ENCODE measurements at regions of chr17 and their contacts with region 1.

Region 1: DNA sequence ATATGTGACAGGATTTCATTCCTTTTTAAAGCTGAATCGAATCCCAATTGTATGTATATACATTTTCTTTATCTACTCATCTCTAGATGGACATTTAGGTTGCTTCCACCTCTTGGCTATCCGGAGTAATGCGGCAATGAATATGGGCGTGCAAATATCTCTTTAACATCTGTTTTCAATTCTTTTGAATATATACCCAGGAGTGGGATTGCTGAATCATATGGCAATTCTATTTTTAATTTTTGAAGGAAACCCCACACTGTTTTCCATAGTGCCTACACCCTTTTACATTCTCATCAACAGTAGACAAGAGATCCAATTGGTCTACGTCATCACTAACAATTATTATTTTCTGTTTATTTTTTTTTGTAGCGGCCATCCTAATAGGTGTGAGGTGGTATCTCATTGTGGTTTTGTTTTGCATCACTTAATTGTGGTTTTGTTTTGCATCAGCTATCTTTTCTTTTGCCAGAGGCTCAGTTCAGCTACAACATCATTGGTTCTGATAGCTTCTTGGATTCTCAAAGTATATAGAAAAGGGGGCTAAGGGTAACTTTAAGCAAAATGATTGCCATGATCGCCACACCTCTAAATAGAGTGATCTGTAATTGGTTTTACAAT is 25.6 kb upstream of the MAP2K6 start:
- DNase-seq: no peak
- H3K4me3 ChIP-seq: no peak overlapping the region
- H3K27ac ChIP-seq: no peak overlapping the region
- H3K4me1 ChIP-seq: no peaks in the 10 kb centered on the region
- CTCF ChIP-seq: no peak

Region 2: DNA sequence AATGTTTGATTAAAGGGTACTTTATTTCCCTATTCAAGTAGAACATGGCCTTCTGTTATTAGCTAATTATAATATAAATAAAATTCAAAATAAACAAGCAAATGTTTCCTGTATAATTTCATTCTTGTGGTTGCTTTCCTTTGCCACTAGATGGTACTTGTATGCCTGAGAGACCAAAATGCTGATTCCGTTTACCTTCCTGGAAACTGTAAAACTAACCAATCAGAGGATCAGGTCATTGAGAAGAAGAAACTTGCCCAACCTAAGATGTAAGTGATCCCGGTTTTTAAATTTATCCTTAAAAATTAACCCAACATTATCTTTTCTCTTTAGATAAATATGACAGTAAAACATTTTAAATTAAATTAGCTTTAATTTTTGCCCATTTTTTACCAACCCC is 53.9 kb before region 1 on chr17:
- CTCF ChIA-PET with region 1: no interaction called
- POLR2A ChIA-PET with region 1: interaction called, 4 read pairs
- intact Hi-C with region 1: loop called (anchors 5 kb)
- DNase-seq: peak; percentile 62
- H3K4me3 ChIP-seq: no peak overlapping the region
- H3K27ac ChIP-seq: no peak overlapping the region
- H3K4me1 ChIP-seq: no peaks in the 10 kb centered on the region
- CTCF ChIP-seq: peak; percentile 80

Region 3: GRCh38 chr17:69358688-69359596 is 30.0 kb before region 1 on chr17:
- CTCF ChIA-PET with region 1: no interaction called
- POLR2A ChIA-PET with region 1: interaction called, 3 read pairs
- intact Hi-C with region 1: loop called (anchors 1 kb)
- DNase-seq: peak; percentile 76
- H3K4me3 ChIP-seq: no peak overlapping the region
- H3K27ac ChIP-seq: no peak overlapping the region
- H3K4me1 ChIP-seq: no peaks in the 10 kb centered on the region
- CTCF ChIP-seq: peak; percentile 84

Region 4: GRCh38 chr17:69567130-69567529 is 178.2 kb after region 1 on chr17:
- CTCF ChIA-PET with region 1: no interaction called
- POLR2A ChIA-PET with region 1: no interaction called
- intact Hi-C with region 1: no loop called
- DNase-seq: no peak
- H3K4me3 ChIP-seq: no peak overlapping the region
- H3K27ac ChIP-seq: no peak overlapping the region
- H3K4me1 ChIP-seq: peaks cover 34% of the 10 kb centered on the region
- CTCF ChIP-seq: no peak

Measured in OCI-LY7 (cell line).